Ascending aorta (tissue), 2 donors: ENCODE measurements at regions of chr1 and their contacts with region 1.

Region 1: GRCh38 chr1:231211005-231211857 is 29.8 kb upstream of the GNPAT start:
- DNase-seq: peak; percentile 12 to 85
- H3K4me3 ChIP-seq: peak overlapping the region in 1 of 2 donors; percentile 59
- H3K27ac ChIP-seq: no peak overlapping the region
- H3K4me1 ChIP-seq: no peaks in the 10 kb centered on the region
- H3K27me3 ChIP-seq: no peaks in the 10 kb centered on the region
- CTCF ChIP-seq: peak; percentile 70 to 96 (median 84)

Region 2: DNA sequence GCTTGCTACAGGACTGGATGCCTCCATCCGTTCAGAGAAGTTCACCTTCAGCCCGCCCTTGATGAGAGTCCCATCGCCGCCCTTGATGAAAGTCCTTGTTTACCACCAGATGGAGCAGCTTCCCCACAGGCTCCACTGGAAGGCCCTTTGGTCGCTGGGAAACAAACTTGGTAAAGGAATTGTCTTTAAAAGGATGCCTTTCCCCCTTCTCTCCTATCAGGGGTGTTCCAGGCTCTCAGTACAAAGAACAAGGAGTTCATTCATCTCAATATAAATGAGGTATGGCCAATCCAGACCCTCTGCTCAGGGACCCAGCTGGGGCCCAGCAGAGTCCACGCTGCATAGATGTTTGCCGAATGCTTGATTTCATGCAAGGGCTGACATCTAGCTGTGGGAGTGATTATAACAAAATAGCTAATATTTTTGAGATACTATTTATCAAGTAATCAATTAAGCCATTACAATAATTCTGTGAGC is 413.3 kb before region 1 on chr1:
- intact Hi-C with region 1: loop called (anchors 1 kb)
- DNase-seq: peak in 1 of 2 donors; percentile 79
- H3K4me3 ChIP-seq: no peak overlapping the region
- H3K27ac ChIP-seq: no peak overlapping the region
- H3K4me1 ChIP-seq: no peaks in the 10 kb centered on the region
- H3K27me3 ChIP-seq: no peaks in the 10 kb centered on the region
- CTCF ChIP-seq: peak; percentile 73 to 90 (median 78)

Region 3: GRCh38 chr1:230917284-230918135 is 293.7 kb before region 1 on chr1:
- intact Hi-C with region 1: loop called (anchors 5 kb)
- DNase-seq: peak in 1 of 2 donors; percentile 87
- H3K4me3 ChIP-seq: no peak overlapping the region
- H3K27ac ChIP-seq: no peak overlapping the region
- H3K4me1 ChIP-seq: peaks cover 0 to 5% of the 10 kb centered on the region in 2 donors
- H3K27me3 ChIP-seq: no peaks in the 10 kb centered on the region
- CTCF ChIP-seq: peak; percentile 58 to 62 (median 62)

Region 4: DNA sequence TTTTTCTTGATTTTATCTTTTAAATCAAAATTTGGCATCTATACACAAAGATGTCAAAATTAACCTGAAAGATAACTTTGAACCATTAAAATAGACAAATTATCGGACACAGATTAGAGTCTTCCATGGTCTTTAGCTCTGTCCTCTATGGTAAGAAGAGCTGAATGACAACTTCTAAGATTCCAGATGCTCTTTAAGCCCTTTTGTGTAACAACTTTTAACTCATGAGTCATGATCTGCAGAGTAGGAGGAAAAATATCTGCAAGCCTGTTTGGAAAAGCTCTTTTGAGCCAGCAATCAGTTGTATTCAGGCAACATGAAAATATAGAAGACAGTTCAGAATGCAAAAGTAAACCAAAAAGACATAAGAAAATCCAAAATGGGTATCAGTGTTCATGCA is 270.4 kb before region 1 on chr1:
- intact Hi-C with region 1: loop called (anchors 1 kb)
- DNase-seq: no peak
- H3K4me3 ChIP-seq: no peak overlapping the region
- H3K27ac ChIP-seq: peak overlapping the region; percentile 75 to 79
- H3K4me1 ChIP-seq: peaks cover 4 to 12% of the 10 kb centered on the region in 2 donors
- H3K27me3 ChIP-seq: no peaks in the 10 kb centered on the region
- CTCF ChIP-seq: no peak